Pancreas (tissue), 10 donors: ENCODE measurements at regions of chr12 and their contacts with region 1.

Region 1: GRCh38 chr12:52980693-52981423 is 25.4 kb upstream of the EIF4B start:
- DNase-seq: peak; percentile 84 to 95 (median 90)
- ATAC-seq: peak; percentile 94 to 99 (median 98)
- H3K4me3 ChIP-seq: no peak overlapping the region
- H3K27ac ChIP-seq: no peak overlapping the region
- H3K4me1 ChIP-seq: no peaks in the 10 kb centered on the region
- H3K27me3 ChIP-seq: no peaks in the 10 kb centered on the region
- CTCF ChIP-seq: peak; percentile 89 to 96 (median 93)

Region 2: GRCh38 chr12:52139552-52140062 is 841.3 kb before region 1 on chr12:
- intact Hi-C with region 1: loop called in 1 of 3 experiments (anchors 10 kb)
- DNase-seq: peak in 3 of 6 donors; percentile 38 to 72 (median 71)
- ATAC-seq: peak; percentile 78 to 95 (median 87)
- H3K4me3 ChIP-seq: no peak overlapping the region
- H3K27ac ChIP-seq: no peak overlapping the region
- H3K4me1 ChIP-seq: no peaks in the 10 kb centered on the region
- H3K27me3 ChIP-seq: no peaks in the 10 kb centered on the region
- CTCF ChIP-seq: peak; percentile 47 to 77 (median 66)

Region 3: GRCh38 chr12:52582971-52583456 is 397.8 kb before region 1 on chr12:
- intact Hi-C with region 1: loop called in 1 of 3 experiments (anchors 10 kb)
- DNase-seq: peak in 4 of 6 donors; percentile 28 to 74 (median 42)
- ATAC-seq: peak; percentile 76 to 97 (median 94)
- H3K4me3 ChIP-seq: no peak overlapping the region
- H3K27ac ChIP-seq: no peak overlapping the region
- H3K4me1 ChIP-seq: no peaks in the 10 kb centered on the region
- H3K27me3 ChIP-seq: no peaks in the 10 kb centered on the region
- CTCF ChIP-seq: peak; percentile 14 to 55 (median 48)

Region 4: DNA sequence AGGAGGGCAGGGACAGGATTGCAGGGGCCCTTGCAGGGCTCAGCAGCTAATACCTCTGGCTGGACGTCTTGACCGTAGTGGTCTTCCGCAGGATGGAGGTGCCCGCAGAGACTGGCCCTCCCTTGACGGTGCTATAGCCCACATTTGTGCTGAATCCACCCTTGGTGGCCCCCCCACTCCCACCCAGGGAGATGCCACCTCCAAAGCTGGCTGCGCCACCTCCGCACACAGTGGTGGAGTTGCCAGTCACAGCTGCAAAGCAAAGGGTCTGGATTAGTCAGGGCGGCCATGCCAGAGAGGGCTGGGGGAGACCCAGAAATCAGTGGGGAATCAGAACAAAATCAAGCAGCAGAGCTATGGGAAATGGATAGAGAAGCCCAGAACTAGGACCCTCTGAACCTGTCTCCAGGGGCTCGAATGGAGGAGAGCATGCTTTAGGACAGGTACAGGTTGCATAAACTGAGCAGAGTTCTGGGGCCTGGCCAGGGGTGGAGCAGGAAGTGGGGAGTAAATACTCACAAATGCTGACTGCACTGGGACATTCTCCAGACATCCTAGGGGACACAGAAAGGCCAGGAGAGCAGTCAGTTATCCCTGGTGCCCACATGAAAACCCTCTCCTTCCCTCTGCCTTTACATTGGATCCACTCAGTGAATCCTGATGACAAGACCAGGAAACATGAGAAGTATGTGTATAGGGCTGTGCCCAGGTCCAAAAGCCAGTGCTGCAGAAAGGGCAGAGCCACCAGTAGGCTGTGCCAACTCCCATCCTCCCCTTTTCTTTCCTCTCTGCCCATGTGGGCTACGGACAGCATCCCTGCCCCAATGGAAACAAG is 158.8 kb before region 1 on chr12:
- intact Hi-C with region 1: no loop called
- DNase-seq: no peak
- ATAC-seq: peak in 3 of 4 donors; percentile 34 to 59 (median 36)
- H3K4me3 ChIP-seq: no peak overlapping the region
- H3K27ac ChIP-seq: no peak overlapping the region
- H3K4me1 ChIP-seq: no peaks in the 10 kb centered on the region
- H3K27me3 ChIP-seq: no peaks in the 10 kb centered on the region
- CTCF ChIP-seq: no peak

Region 5: GRCh38 chr12:52884526-52885293 is 96.1 kb before region 1 on chr12:
- intact Hi-C with region 1: loop called in 2 of 3 experiments (anchors 2 to 5 kb)
- DNase-seq: peak; percentile 76 to 96 (median 88)
- ATAC-seq: peak; percentile 84 to 91 (median 90)
- H3K4me3 ChIP-seq: no peak overlapping the region
- H3K27ac ChIP-seq: peak overlapping the region; percentile 51 to 70 (median 61)
- H3K4me1 ChIP-seq: peaks cover 0 to 4% (median 0%) of the 10 kb centered on the region in 3 donors
- H3K27me3 ChIP-seq: no peaks in the 10 kb centered on the region
- CTCF ChIP-seq: peak; percentile 92 to 97 (median 94)

Region 6: DNA sequence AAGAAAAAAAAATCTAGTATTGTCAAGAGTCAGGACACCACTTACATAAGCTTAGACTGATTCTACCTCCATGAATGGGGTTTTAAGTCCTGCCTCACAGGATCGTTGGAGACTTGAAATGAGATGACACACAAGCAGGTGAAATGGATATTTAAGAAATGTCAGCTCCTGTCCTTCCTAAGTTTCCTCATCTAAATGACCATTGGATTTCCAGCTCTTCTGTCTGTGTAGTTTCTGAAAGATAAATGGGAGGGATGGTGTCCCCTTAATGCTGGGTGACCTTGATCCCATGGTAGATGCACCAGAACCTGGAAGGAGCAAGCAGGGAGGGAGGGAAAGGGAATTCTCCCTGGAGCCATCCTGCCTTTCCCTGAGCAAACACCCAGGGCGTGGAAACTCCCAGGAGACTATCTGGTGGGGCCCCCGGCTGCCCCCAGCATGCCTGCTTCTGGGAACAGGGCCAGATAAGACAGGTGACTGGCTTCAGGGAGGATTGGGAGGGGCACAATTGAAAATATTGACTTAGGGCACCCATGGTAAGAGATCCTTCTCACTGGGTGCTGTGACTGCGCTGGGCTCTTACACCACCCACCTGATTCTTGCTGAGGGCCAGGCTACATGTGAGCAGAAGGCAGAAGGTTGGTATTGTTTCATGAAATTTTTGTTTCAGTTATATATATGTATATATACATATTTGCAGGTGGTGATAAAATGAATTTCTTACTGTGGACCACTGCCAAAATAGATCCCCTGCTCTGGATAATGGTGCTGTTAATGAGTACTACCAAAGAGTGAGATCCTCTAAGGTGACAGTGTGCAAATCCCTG is 85.6 kb before region 1 on chr12:
- intact Hi-C with region 1: loop called in 1 of 3 experiments (anchors 10 kb)
- DNase-seq: peak in 5 of 6 donors; percentile 68 to 86 (median 77)
- ATAC-seq: peak; percentile 53 to 91 (median 81)
- H3K4me3 ChIP-seq: no peak overlapping the region
- H3K27ac ChIP-seq: peak overlapping the region; percentile 8 to 57 (median 38)
- H3K4me1 ChIP-seq: peaks cover 6 to 44% (median 24%) of the 10 kb centered on the region in 3 donors
- H3K27me3 ChIP-seq: no peaks in the 10 kb centered on the region
- CTCF ChIP-seq: no peak